CD4-positive, alpha-beta memory T cell (primary cell): ENCODE measurements at regions of chr5 and their contacts with region 1.

Region 1: DNA sequence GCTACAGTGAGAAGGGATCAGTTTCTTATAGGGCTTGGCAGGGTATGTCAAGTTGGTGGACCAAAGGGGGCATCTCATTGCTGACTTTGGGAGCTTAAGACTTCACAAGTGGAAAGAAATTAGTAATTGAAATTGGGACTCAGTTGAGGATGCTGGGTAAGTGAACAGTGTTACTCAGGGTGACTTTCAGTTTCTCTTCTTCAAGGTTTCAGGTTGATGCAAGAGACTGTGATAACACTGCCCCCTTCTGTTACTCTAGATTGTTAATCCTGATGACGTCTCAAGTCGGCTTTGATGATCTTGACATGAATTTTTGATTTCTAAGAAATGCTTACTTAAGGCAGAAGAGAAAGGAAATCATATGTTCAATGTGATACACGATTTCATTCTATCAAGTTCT is 21.3 kb downstream of the KCTD16 start:
- DNase-seq: peak; percentile 73 to 86 (median 82)
- H3K4me3 ChIP-seq: peak overlapping the region in 1 of 2 donors; percentile 32
- H3K4me3 Mint-ChIP-seq: no peak overlapping the region
- H3K27ac ChIP-seq: peak overlapping the region; percentile 78
- H3K27ac Mint-ChIP-seq: no peak overlapping the region
- H3K4me1 ChIP-seq: peaks cover 55% of the 10 kb centered on the region
- H3K4me1 Mint-ChIP-seq: peaks cover 0 to 40% (median 35%) of the 10 kb centered on the region in 4 donors
- H3K27me3 ChIP-seq: no peaks in the 10 kb centered on the region
- H3K27me3 Mint-ChIP-seq: no peaks in the 10 kb centered on the region

Region 2: GRCh38 chr5:142922223-142922952 is 1269.6 kb before region 1 on chr5:
- CTCF ChIA-PET with region 1: interaction called, 11 read pairs
- POLR2A ChIA-PET with region 1: no interaction called
- intact Hi-C with region 1: loop called (anchors 1 kb)
- DNase-seq: peak in 4 of 5 donors; percentile 9 to 32 (median 20)
- H3K4me3 ChIP-seq: no peak overlapping the region
- H3K4me3 Mint-ChIP-seq: no peak overlapping the region
- H3K27ac ChIP-seq: no peak overlapping the region
- H3K27ac Mint-ChIP-seq: peak overlapping the region in 4 of 7 donors; percentile 19 to 60 (median 27)
- H3K4me1 ChIP-seq: peaks cover 10% of the 10 kb centered on the region
- H3K4me1 Mint-ChIP-seq: peaks cover 19 to 34% (median 28%) of the 10 kb centered on the region in 4 donors
- H3K27me3 ChIP-seq: no peaks in the 10 kb centered on the region
- H3K27me3 Mint-ChIP-seq: no peaks in the 10 kb centered on the region

Region 3: DNA sequence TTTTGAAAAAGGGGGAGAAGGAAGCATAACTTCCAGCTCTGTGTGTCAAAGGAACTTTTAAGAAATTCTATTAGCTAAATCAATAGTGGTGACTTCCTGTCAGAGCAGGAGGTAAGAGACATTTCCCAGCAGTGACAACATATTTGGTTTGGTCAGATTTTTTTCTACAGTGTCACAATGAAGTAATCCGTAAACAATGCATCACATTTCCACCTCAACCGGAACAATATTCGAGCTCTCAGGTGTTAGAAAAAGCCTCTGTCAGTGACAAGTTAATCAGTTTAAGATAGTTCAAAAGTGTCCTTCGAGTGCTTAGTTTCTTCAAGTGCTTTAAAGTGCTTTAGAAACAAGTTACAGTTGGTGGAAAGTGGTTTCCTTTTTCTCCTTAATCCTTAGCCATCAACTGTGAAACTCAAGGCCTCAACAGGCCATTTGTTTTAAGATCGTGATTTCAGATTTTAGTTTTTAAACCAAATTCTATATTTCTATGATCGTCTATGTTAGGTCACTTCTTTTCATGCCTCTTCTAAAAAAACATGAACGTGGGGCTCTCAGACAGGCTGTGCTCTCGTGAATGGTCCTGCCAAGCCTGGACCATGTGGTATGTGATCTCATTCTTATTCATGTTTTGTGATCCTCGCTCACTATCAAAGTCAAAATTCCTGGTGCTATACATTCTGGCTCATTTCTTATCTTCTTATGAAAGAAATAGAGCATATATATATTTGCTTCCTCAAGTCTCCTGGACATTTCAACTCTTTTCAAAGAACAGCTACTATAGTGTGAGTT is 561.9 kb before region 1 on chr5:
- CTCF ChIA-PET with region 1: no interaction called
- POLR2A ChIA-PET with region 1: no interaction called
- intact Hi-C with region 1: loop called (anchors 5 kb)
- DNase-seq: no peak
- H3K4me3 ChIP-seq: no peak overlapping the region
- H3K4me3 Mint-ChIP-seq: no peak overlapping the region
- H3K27ac ChIP-seq: no peak overlapping the region
- H3K27ac Mint-ChIP-seq: no peak overlapping the region
- H3K4me1 ChIP-seq: no peaks in the 10 kb centered on the region
- H3K4me1 Mint-ChIP-seq: no peaks in the 10 kb centered on the region
- H3K27me3 ChIP-seq: no peaks in the 10 kb centered on the region
- H3K27me3 Mint-ChIP-seq: no peaks in the 10 kb centered on the region

Region 4: GRCh38 chr5:143968011-143968878 is 223.8 kb before region 1 on chr5:
- CTCF ChIA-PET with region 1: no interaction called
- POLR2A ChIA-PET with region 1: no interaction called
- intact Hi-C with region 1: loop called (anchors 5 kb)
- DNase-seq: peak in 4 of 5 donors; percentile 14 to 24 (median 22)
- H3K4me3 ChIP-seq: no peak overlapping the region
- H3K4me3 Mint-ChIP-seq: no peak overlapping the region
- H3K27ac ChIP-seq: no peak overlapping the region
- H3K27ac Mint-ChIP-seq: no peak overlapping the region
- H3K4me1 ChIP-seq: no peaks in the 10 kb centered on the region
- H3K4me1 Mint-ChIP-seq: peaks cover 0 to 3% (median 0%) of the 10 kb centered on the region in 4 donors
- H3K27me3 ChIP-seq: no peaks in the 10 kb centered on the region
- H3K27me3 Mint-ChIP-seq: peaks cover 4 to 13% of the 10 kb centered on the region in 2 donors

Region 5: DNA sequence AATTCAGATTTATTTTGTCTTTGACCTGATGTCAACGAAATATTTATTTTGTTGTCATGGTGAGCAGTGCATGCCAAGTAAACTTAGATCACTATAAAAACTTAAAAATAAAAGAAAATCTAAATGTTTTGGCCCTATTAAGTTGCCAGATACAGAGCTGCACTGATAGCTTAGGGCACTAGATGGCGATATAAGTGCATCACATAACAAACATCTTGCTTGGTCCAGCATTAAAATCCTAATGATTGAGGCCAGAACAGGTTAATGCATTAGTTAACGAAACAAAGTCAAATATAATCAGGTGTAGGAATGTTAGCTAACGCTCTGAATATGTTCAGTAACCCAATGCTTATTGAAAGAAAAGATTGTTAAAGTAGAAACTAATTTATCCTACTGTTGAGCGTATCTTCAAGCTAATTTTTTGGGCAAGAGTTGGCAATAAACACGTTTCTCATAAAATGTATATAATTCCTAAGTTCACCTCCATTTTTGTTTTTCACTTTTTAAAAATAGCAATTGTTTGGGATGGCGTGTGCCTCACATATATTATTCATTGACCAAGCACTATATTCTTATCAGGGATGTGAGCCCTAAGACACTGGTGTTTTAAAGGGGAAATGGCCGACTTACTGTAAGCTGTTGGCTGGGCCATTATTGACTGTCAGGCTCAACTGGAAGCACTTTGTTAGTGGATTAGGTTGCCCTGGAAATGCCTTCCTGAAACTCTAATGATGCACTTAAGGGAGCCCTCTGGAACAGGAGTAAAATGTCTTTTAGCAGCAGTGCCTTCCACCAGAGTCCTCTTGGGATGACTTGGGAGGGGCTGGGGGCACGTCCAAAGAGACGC is 12.0 kb after region 1 on chr5:
- CTCF ChIA-PET with region 1: interaction called, 25 read pairs
- POLR2A ChIA-PET with region 1: interaction called, 4 read pairs
- intact Hi-C with region 1: no loop called
- DNase-seq: peak in 4 of 5 donors; percentile 36 to 55 (median 38)
- H3K4me3 ChIP-seq: no peak overlapping the region
- H3K4me3 Mint-ChIP-seq: no peak overlapping the region
- H3K27ac ChIP-seq: no peak overlapping the region
- H3K27ac Mint-ChIP-seq: no peak overlapping the region
- H3K4me1 ChIP-seq: no peaks in the 10 kb centered on the region
- H3K4me1 Mint-ChIP-seq: peaks cover 4 to 6% (median 5%) of the 10 kb centered on the region in 4 donors
- H3K27me3 ChIP-seq: peaks cover 4% of the 10 kb centered on the region
- H3K27me3 Mint-ChIP-seq: peaks cover 37 to 48% of the 10 kb centered on the region in 2 donors